ENCODE measurements at regions of chr11 and their contacts with region 1.

Region 1: DNA sequence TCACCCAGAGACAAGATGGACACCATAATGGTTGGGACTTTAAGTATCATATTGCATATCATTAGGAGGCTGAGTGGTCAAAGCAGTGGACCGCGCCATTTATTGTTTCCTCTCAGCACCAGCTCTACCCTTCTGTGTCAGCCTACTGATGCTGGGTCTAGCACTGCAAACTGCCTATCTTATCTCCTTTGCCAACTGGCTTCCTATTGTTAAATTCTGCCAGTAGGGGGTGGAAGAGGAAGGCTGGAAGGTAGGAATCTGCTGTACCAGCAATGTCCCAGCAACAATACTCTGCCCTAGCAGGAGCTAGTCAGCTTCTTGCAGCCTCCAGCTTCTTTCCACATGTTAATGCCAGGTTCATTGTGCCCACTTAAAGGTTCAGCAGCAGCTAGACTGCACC is 367.1 kb upstream of the PDGFD start:
- DNase-seq: peak in 1 of 2 experiments; percentile 10
- H3K4me3 ChIP-seq: no peak overlapping the region
- H3K27ac ChIP-seq: no peak overlapping the region
- H3K4me1 ChIP-seq: peaks cover 0 to 5% (median 2%) of the 10 kb centered on the region in 4 experiments; a peak in 4 of 7 replicates
- H3K27me3 ChIP-seq: no peaks in the 10 kb centered on the region
- CTCF ChIP-seq: peak; percentile 1 to 57 (median 28); a peak in 3 of 4 replicates
- EP300 ChIP-seq: no peak
- POLR2A ChIP-seq: no peak
- RAD21 ChIP-seq: peak; percentile 59 to 71

Region 2: DNA sequence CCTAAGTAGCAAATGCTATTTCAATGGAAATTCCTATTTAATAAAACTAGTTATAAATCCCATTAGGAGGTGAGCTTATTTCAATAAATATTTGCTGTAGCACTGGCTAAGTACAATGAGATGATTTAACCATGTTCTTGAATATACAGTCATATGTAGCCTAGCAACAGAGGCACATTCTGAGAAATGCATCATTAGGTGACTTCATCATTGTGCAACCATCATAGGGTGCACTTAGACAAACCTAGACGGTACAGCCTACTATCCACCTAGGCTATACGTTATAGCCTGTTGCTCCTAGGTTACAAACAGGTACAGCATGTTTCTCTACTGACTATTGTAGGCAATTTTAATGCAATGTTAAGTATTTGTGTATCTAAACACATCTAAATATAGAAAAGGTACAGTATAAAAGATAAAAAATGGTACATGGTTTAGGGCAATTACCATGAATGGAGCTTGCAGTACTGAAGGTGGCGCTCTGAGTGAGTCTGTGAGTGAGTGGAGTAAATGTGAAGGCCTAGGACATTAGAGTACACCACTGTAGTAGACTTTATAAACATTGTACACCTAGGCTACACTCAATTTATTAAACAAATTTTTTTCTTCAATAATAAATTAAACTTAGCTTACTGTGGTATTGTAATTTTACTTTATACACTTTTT is 17.1 kb after region 1 on chr11:
- CTCF ChIA-PET with region 1: interaction called, 10 read pairs
- POLR2A ChIA-PET with region 1: no interaction called
- DNase-seq: no peak
- H3K4me3 ChIP-seq: no peak overlapping the region
- H3K27ac ChIP-seq: no peak overlapping the region
- H3K4me1 ChIP-seq: no peaks in the 10 kb centered on the region
- H3K27me3 ChIP-seq: no peaks in the 10 kb centered on the region
- CTCF ChIP-seq: peak in 2 of 3 experiments; percentile 16 to 50; a peak in 2 of 4 replicates
- EP300 ChIP-seq: no peak
- POLR2A ChIP-seq: no peak
- RAD21 ChIP-seq: peak; percentile 64